Spleen (tissue), 13 donors: ENCODE measurements at regions of chr1 and their contacts with region 1.

Region 1: GRCh38 chr1:65687428-65688214 is 105.1 kb upstream of the PDE4B start:
- DNase-seq: peak; percentile 90
- H3K4me3 ChIP-seq: no peak overlapping the region
- H3K27ac ChIP-seq: peak overlapping the region in 2 of 8 donors; percentile 17 to 33
- H3K4me1 ChIP-seq: peaks cover 13 to 36% (median 19%) of the 10 kb centered on the region in 6 donors
- H3K27me3 ChIP-seq: peaks cover 0 to 11% (median 0%) of the 10 kb centered on the region in 7 donors
- CTCF ChIP-seq: peak; percentile 83 to 97 (median 94)
- POLR2A ChIP-seq: no peak

Region 2: DNA sequence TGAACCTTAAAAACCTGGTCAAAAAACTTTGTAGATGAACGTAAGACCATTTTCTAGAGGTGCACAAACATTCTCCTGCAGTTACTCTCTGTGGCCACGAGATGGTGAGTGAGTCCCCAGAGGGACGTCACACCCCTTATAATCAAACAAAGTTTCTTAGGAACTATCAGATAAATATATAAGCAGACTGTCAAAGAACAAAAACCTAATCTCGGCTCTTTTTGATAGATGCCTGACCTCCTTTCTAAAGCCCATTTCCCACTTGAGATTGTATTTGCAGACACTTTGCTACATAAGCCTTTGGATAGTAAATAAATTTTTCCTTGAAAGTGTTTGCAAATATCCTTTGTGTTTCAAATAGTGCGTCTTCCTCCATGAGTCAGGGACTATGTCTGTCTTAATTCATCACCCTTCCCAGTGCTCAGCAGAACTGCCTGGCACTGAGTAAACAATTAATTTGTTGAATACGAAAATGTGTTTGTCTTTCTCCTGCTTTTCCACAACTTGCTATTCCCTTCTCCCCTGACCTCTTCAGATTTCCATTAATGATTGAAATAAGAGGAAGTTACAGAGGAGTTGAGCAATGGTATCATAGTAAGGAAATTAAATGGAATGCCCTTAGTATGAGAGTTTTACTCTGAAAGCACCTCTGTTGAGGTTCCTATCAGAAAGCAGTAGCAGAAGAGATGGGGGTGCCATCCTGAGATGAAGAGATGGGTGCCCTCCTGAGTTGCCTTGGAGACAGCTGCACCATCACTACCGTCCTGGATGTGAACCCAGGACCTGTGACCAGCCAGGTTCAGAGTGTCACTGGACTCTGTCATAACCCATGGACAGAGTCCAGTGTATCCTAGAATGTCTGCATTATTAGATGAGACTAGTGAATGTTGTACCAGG is 1000.5 kb before region 1 on chr1:
- intact Hi-C with region 1: loop called (anchors 10 kb)
- DNase-seq: no peak
- H3K4me3 ChIP-seq: no peak overlapping the region
- H3K27ac ChIP-seq: peak overlapping the region in 2 of 8 donors; percentile 48 to 52
- H3K4me1 ChIP-seq: peaks cover 0 to 29% (median 16%) of the 10 kb centered on the region in 6 donors
- H3K27me3 ChIP-seq: no peaks in the 10 kb centered on the region
- CTCF ChIP-seq: peak; percentile 35 to 82 (median 70)
- POLR2A ChIP-seq: no peak

Region 3: GRCh38 chr1:65059930-65060538 is 627.6 kb before region 1 on chr1:
- intact Hi-C with region 1: loop called (anchors 10 kb)
- DNase-seq: no peak
- H3K4me3 ChIP-seq: no peak overlapping the region
- H3K27ac ChIP-seq: peak overlapping the region in 2 of 8 donors; percentile 12 to 20
- H3K4me1 ChIP-seq: peaks cover 30 to 100% (median 70%) of the 10 kb centered on the region in 6 donors
- H3K27me3 ChIP-seq: no peaks in the 10 kb centered on the region
- CTCF ChIP-seq: peak; percentile 50 to 87 (median 72)
- POLR2A ChIP-seq: no peak

Region 4: DNA sequence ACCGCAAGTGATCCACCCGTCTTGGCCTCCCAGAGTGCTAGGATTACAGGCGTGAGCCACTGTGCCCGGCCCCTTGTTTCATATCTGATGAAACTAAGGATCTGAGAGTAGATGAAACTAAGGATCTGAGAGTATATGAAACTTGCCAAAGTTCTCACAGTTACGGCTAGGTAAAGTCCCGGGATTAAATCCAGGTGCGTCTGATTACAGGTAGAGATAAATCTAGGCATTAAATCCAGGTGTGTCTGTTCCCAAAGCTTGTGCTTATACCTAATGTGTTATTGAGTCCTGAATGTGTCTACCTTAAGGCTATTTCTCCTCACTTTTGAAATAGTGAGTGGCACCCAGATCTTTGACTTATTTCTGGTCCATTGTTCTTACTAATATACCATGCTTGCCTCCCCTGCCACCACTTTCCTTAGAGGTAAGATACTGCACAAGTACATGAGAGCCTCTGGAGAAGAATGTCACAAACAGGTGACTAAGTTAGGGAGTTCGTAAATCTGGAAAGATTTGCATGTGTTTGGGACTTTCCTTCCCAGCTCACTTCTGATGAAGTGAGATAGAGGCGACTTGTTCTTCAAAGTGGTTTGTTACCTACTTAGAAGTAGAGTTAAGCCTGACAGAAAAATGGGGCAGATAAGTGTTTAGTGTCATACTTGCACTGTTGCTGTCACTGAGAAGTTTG is 473.1 kb before region 1 on chr1:
- intact Hi-C with region 1: loop called (anchors 5 kb)
- DNase-seq: no peak
- H3K4me3 ChIP-seq: no peak overlapping the region
- H3K27ac ChIP-seq: no peak overlapping the region
- H3K4me1 ChIP-seq: peaks cover 0 to 7% (median under 1%) of the 10 kb centered on the region in 6 donors
- H3K27me3 ChIP-seq: no peaks in the 10 kb centered on the region
- CTCF ChIP-seq: no peak
- POLR2A ChIP-seq: no peak

Region 5: GRCh38 chr1:65431111-65431705 is 256.4 kb before region 1 on chr1:
- intact Hi-C with region 1: loop called (anchors 5 kb)
- DNase-seq: no peak
- H3K4me3 ChIP-seq: no peak overlapping the region
- H3K27ac ChIP-seq: no peak overlapping the region
- H3K4me1 ChIP-seq: peaks cover 0 to 22% (median 13%) of the 10 kb centered on the region in 6 donors
- H3K27me3 ChIP-seq: no peaks in the 10 kb centered on the region
- CTCF ChIP-seq: peak in 9 of 11 experiments; percentile 24 to 65 (median 45)
- POLR2A ChIP-seq: no peak